ENCODE measurements at regions of chr7 and their contacts with region 1.

Region 1: DNA sequence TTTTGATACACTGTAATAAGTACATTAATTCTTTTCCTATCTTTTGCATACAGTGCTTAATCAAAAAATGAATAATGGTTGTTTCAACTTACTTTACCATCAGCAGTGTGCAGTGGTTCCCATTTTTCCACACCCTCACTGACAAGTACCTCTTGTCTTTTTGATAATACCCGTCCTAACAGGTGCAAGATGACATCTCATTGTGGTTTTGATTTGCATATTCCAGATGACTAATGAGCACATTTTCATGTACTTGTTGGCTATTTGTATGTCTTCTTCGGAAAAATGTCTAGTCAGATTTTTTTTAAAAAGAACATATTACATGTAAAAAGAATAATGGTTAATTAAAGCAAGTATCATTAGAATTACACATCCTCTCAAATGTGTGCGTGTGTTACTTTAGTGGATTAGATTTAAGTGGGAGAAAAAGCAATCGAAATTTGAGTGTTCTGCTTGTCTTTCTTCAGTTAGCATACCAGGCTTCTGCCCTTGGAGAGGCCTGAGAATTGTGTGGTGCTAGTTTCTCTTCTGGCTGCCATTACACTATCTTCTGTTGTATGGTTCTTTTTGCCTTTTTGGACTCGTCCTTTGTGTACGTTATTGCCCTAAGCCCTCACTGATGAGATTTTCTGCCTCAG is 291.2 kb downstream of the AUTS2 start:
- DNase-seq: no peak
- H3K4me3 ChIP-seq: no peak overlapping the region
- H3K27ac ChIP-seq: no peak overlapping the region
- H3K4me1 ChIP-seq: peaks cover 6% of the 10 kb centered on the region
- H3K27me3 ChIP-seq: no peaks in the 10 kb centered on the region
- CTCF ChIP-seq: no peak
- EP300 ChIP-seq: no peak
- POLR2A ChIP-seq: no peak

Region 2: GRCh38 chr7:69217516-69218350 is 671.7 kb before region 1 on chr7:
- intact Hi-C with region 1: no loop called
- DNase-seq: no peak
- H3K4me3 ChIP-seq: no peak overlapping the region
- H3K27ac ChIP-seq: no peak overlapping the region
- H3K4me1 ChIP-seq: no peaks in the 10 kb centered on the region
- H3K27me3 ChIP-seq: no peaks in the 10 kb centered on the region
- CTCF ChIP-seq: no peak
- EP300 ChIP-seq: no peak
- POLR2A ChIP-seq: no peak

Region 3: DNA sequence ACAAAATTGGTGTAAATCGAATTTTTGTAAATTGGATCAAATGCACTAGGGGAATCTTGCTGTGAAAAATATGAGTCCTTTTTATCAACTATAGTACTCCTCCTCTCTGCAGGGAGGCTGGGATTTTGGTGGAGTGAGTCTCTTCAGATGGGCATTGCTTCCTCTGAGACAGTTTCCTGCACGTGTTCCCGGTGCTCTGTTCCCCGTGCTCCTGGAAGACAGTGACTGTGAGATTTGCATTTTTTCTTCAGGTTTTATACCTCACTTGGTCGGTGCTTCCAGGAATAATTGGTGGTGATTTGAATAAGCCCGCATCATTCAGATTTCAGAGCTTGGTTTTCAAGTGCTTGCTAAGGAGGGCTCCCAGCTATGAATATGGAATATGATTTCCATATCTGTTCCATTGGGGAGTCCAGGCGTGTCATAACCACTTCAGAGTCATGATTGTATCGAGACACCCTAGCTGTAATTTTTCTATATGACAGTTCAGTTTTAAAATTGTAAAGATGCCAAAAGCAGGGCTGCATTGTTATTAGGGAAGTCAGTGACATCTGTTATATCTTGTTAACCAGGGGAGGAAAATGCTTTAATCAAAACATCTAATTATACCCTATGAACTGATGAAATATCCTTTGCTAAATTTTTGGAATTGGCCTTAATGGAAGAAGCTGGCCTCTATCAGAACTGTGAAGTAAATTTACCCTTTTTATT is 278.9 kb before region 1 on chr7:
- intact Hi-C with region 1: loop called in 1 of 4 experiments (anchors 10 kb)
- DNase-seq: no peak
- H3K4me3 ChIP-seq: no peak overlapping the region
- H3K27ac ChIP-seq: no peak overlapping the region
- H3K4me1 ChIP-seq: peaks cover 1% of the 10 kb centered on the region
- H3K27me3 ChIP-seq: no peaks in the 10 kb centered on the region
- CTCF ChIP-seq: no peak
- EP300 ChIP-seq: no peak
- POLR2A ChIP-seq: no peak

Region 4: DNA sequence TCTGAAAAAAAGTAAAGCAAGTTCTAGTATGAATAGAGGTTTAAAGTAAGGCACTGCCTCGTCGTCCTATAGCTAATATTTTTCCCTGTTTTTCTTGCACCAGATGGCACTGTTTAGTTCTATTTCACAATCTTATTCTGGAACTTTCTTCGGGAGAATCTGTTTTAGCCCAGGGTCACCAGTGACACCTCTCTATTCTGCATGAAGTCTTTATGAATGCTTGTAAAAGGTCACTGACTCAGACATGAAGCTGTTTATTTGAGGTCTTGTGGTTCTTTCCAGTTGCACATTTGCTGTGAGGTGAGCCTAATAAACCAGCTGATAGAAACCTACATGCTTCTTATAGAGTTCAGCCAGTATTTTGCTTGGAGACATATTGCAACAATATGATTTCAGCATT is 153.1 kb after region 1 on chr7:
- intact Hi-C with region 1: no loop called
- DNase-seq: no peak
- H3K4me3 ChIP-seq: no peak overlapping the region
- H3K27ac ChIP-seq: no peak overlapping the region
- H3K4me1 ChIP-seq: no peaks in the 10 kb centered on the region
- H3K27me3 ChIP-seq: no peaks in the 10 kb centered on the region
- CTCF ChIP-seq: peak in 1 of 3 donors; percentile 26
- EP300 ChIP-seq: no peak
- POLR2A ChIP-seq: no peak